ENCODE measurements at regions of chr7 and their contacts with region 1.

Region 1: DNA sequence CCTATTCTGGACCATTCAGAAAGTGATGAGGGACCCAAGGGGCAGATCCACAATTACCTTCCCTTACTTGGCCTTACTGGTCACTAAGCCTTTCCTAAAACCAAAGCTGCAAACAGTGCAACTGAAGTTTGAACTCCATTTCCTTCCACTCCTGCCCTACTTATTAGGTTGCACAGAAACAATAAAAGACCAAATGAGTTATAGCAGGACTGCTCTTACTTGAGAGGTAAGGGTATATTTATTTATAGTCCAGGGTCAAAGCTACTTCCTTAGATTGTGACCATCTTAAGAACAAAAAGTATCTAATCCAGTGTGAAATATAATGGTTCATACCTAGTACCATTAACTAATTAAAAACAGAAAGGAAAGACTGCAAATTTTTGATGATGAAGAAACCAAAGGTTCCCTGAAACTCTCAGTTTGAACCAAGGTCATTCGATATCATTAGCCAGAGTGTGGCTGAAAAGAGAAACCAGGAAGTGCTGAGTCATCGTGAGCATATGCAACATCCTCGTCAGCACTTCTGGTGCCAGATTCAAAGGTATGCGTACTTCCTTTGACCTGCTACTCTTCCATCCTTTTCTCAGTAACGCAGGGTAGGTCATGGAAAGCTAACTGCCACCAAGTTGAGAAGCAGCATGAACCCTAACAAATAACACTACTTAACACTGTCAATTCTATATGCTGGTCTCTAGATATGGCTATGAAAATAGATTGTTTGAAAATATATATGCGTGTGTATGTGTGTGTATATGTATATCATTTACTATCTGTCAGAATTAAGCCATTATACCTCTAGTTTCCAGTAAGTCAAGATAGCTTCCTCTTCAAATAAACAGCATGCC is 26.8 kb downstream of the CDK6 start:
- DNase-seq: peak; percentile 92
- ATAC-seq: peak; percentile 94
- H3K4me3 ChIP-seq: peak overlapping the region in 1 of 2 experiments; percentile 14; a peak in 2 of 4 replicates
- H3K27ac ChIP-seq: peak overlapping the region; percentile 99
- H3K4me1 ChIP-seq: peaks cover 52% of the 10 kb centered on the region
- H3K27me3 ChIP-seq: no peaks in the 10 kb centered on the region
- CTCF ChIP-seq: no peak

Region 2: DNA sequence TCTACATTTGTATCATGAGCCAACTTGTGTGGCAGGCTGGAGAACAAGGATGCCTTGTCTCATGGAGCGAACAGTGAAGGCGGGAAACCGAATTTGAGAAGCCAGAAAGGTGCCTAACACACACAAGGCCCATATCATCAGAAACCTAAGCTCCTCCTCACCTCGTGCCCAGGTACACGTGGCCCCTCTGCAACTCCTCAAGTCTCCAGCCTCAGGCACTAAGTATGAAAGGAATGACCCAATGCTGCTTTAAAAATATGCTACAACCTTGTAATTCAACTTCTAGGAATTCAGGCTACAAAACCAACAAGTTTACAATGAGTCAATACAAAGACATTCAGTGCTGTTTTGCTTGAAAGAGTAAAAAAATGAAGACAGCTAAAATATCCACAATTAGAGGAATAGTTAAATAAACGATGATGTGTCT is 68.9 kb before region 1 on chr7:
- CTCF ChIA-PET with region 1: no interaction called
- POLR2A ChIA-PET with region 1: no interaction called
- in situ Hi-C with region 1: no loop called
- intact Hi-C with region 1: loop called (anchors 10 kb)
- DNase-seq: no peak
- ATAC-seq: peak; percentile 53; the same call in 1 of the 2 replicates
- H3K4me3 ChIP-seq: no peak overlapping the region
- H3K27ac ChIP-seq: peak overlapping the region; percentile 50; the same call in 1 of the 2 replicates
- H3K4me1 ChIP-seq: peaks cover 20% of the 10 kb centered on the region
- H3K27me3 ChIP-seq: no peaks in the 10 kb centered on the region
- CTCF ChIP-seq: no peak